Ascending aorta (tissue), 2 donors: ENCODE measurements at regions of chr17 and their contacts with region 1.

Region 1: DNA sequence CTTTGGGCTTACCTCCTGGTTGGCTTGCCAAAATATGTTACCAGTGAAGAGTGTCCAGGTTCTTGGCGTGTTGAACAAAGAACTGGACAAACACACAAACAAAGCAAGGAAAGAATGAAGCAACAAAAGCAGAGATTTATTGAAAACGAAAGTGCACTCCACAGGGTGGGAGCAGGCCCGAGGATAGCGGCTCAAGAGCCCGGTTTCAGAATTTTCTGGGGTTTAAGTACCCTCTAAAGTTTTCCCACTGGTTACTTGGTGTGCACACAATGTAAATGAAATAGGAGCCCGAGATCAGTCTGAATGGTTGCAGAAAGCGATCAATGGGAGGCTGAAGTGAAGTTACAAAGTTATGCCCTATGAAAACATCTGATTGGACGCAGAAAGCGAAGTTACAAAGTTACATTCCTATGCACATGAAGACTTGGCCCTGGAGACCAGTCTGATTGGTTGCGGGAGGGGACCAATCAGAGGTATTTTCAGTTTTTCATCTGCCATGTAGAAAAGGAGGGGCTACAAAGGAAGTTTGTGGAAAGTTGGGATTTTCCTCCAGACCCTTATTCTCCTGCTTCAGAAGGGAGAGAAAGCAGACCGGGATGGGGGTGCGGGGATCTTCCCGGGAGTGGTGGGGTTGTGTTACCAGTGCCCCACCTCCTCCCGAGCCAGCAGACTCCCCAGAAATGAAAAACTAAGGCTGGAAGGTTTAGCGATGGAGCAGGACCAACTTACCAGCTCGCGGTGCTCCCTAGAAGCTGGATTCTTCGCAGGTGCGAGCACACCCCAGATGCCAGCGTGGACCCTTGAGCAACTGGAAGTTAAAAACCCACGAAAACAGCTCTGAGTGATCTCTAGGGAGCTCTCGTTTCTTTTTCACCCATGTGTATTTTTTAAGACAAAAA is at the start of gene SLFN12:
- DNase-seq: peak in 1 of 2 donors; percentile 85
- H3K4me3 ChIP-seq: peak within 1 kb of the TSS; percentile 68 to 70
- H3K27ac ChIP-seq: peak within 1 kb of the TSS; percentile 84 to 91
- H3K4me1 ChIP-seq: peaks cover 0 to 19% of the 10 kb centered on the region in 2 donors
- H3K27me3 ChIP-seq: no peaks in the 10 kb centered on the region
- CTCF ChIP-seq: no peak
- total RNA-seq, gene SLFN12: 6.8 TPM

Region 2: DNA sequence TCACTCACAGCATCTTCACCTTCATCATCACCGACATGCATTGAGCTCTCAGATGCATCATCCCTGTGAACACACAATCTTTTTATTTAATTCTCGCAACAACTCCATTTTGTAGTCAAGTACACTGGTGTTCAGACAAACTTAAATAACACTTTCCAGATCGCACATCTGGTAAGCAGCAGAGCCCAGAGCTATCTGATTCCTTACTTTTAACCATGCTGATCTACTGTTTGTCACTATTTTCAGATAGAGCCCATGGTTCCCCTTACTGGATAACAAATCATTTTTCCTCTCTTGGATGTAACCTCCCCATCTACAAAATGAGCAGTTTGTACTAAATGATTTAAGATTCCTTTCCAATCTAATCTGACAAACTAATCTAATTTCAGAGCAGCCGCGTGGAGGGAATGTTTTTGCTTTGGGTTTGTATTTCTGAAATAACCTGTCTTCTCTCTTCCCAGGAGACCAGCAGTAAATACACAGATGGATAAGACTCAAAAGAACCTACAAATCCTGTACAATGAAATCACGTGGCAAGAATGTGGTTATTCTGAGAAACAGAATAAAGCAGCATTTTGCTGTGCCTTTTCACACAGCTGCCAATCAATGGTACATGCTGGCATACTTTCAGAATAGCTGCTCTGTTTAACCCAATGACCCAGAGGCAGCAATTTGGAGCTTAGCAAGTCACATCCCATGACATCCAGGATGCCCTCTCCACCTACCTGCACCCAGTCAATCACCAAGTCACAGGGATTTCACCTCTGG is 1250.2 kb before region 1 on chr17:
- intact Hi-C with region 1: no loop called
- DNase-seq: no peak
- H3K4me3 ChIP-seq: no peak overlapping the region
- H3K27ac ChIP-seq: no peak overlapping the region
- H3K4me1 ChIP-seq: peaks cover 0 to 6% of the 10 kb centered on the region in 2 donors
- H3K27me3 ChIP-seq: no peaks in the 10 kb centered on the region
- CTCF ChIP-seq: no peak

Region 3: DNA sequence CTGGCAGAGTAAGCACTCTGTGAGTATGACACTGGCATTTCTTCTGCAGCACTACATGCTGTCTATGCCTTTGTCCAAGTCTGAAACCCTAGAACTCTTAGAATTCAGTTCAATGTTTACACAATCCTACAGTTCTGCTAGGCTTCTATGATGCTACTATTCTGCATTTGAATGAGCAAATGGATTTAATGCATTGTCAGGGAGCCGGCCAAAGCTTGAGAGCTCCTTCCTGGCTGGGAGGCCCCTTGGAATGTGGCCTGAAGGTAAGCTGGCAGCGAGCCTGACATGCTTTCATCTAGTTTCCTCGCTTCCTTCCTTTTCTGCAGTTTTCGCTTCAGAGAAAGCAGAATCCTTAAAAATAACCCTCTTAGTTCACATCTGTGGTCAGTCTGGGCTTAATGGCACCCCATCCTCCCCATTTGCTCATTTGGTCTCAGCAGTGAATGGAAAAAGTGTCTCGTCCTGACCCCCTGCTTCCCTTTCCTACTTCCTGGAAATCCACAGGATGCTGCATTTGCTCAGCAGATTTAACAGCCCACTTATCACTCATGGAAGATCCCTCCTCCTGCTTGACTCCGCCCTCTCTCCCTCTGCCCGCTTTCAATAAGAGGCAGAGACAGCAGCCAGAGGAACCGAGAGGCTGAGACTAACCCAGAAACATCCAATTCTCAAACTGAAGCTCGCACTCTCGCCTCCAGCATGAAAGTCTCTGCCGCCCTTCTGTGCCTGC is 1177.6 kb before region 1 on chr17 and contains the start of gene CCL2:
- intact Hi-C with region 1: loop called (anchors 2 kb)
- DNase-seq: peak in 1 of 2 donors; percentile 86
- H3K4me3 ChIP-seq: peak within 1 kb of the TSS; percentile 46 to 56
- H3K27ac ChIP-seq: peak within 1 kb of the TSS; percentile 87 to 89
- H3K4me1 ChIP-seq: peaks cover 39 to 60% of the 10 kb centered on the region in 2 donors
- H3K27me3 ChIP-seq: no peaks in the 10 kb centered on the region
- CTCF ChIP-seq: no peak
- total RNA-seq, gene CCL2: 162 TPM

Region 4: GRCh38 chr17:35373534-35373983 is 58.9 kb before region 1 on chr17 and contains the start of gene SLFN11:
- intact Hi-C with region 1: loop called (anchors 1 kb)
- DNase-seq: peak; percentile 79 to 95
- H3K4me3 ChIP-seq: peak within 1 kb of the TSS; percentile 78 to 87
- H3K27ac ChIP-seq: peak within 1 kb of the TSS; percentile 97
- H3K4me1 ChIP-seq: peaks cover 0 to 10% of the 10 kb centered on the region in 2 donors
- H3K27me3 ChIP-seq: no peaks in the 10 kb centered on the region
- CTCF ChIP-seq: no peak
- total RNA-seq, gene SLFN11: 30.3 TPM

Region 5: DNA sequence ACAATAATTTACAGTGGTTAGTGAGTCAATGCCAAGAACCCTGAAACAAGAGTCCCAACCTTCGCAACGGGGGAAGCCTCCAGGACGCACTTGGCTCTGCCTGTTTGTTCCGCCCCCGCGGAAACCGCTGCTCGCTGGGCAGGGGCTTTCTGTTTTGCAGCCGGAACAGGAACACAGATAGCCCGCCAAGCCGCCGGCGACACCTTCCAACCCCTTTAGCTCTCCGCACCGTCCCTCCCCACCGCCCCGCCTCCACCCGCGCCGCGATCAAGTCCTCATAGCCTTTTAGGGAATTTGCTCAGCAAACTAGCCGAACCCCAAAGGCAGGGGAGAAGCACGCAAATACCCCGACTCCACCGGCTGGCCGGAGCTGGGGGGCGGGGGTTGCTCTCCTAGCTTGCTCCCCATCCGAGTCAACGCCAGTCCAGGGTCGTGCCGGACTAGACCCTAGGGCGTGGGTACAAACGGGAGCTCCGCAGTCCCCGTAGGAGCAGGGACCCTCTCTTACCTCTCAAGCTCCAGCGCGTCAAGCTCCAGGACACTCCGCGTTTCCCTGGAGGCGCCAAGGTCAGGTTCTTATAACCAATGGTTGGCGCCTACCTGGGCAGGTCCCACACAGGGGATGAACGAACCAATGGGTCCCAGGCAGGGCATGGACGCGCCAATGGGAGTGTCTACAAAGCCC is 15.9 kb after region 1 on chr17 and contains the start of gene SLFN13:
- intact Hi-C with region 1: loop called (anchors 2 kb)
- DNase-seq: peak; percentile 57 to 85
- H3K4me3 ChIP-seq: peak within 1 kb of the TSS; percentile 69 to 96
- H3K27ac ChIP-seq: peak within 1 kb of the TSS; percentile 42 to 71
- H3K4me1 ChIP-seq: peaks cover 0 to 9% of the 10 kb centered on the region in 2 donors
- H3K27me3 ChIP-seq: no peaks in the 10 kb centered on the region
- CTCF ChIP-seq: no peak
- total RNA-seq, gene SLFN13: 7.1 TPM

Region 6: GRCh38 chr17:35460354-35460851 is 28.0 kb after region 1 on chr17:
- intact Hi-C with region 1: no loop called
- DNase-seq: peak in 1 of 2 donors; percentile 65
- H3K4me3 ChIP-seq: peak overlapping the region; percentile 18 to 48
- H3K27ac ChIP-seq: no peak overlapping the region
- H3K4me1 ChIP-seq: no peaks in the 10 kb centered on the region
- H3K27me3 ChIP-seq: no peaks in the 10 kb centered on the region
- CTCF ChIP-seq: no peak

Region 7: DNA sequence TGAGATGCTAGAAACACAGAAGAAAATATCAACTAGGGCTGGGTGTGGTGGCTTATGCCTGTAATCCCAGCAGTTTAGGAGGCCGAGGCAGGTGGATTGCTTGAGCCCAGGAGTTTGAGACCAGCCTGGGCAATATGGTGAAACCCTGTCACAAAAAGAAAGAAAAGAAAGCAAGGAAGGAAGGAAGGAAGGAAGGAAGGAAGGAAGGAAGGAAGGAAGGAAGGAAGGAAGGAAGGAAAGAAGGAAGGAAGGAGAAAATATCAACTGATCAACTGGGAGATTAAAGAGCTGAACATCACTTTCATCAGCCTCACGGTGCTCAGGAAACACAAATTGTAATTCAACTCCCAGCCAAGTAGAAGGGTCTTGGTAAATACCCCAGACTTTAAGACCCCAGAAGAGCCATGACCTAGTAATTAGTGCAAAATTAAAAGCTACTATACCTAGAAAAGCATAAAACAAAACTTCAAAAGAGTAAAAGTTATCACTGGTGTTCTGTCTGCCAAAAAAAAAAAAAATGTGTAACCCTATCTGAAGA is 43.9 kb after region 1 on chr17:
- intact Hi-C with region 1: no loop called
- DNase-seq: no peak
- H3K4me3 ChIP-seq: no peak overlapping the region
- H3K27ac ChIP-seq: no peak overlapping the region
- H3K4me1 ChIP-seq: no peaks in the 10 kb centered on the region
- H3K27me3 ChIP-seq: no peaks in the 10 kb centered on the region
- CTCF ChIP-seq: no peak

Region 8: DNA sequence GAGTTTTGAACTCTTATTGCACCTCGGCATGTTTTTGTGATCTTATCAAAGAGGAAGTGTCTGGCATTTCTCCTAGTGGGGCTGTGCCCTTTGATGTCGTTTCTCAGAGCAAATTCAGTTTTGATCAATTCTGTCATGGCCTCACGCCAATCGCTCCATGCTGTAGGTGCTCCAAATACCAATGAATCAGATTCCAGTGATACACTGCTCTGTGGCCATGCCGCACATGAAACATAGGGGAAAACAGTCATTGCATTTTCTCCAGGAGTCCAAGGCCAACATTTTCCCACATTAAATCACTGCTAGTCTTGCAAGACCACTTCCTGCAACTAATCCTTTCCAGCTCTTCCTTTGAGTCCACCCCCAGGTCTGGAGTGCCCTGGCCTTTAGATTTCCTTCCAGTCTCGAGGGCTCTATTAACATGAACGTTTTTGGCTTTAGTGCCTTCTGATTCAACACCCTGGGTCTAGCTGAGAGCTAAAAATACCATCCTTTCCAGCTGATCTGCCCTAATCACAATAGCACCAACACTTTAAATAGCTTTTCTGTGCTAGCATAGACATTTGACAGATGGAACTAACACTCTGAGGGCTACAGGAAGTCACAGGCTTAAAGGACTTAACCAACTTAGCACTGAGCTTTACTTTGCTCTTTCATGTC is 280.8 kb after region 1 on chr17:
- intact Hi-C with region 1: loop called (anchors 10 kb)
- DNase-seq: peak; percentile 37 to 91
- H3K4me3 ChIP-seq: peak overlapping the region in 1 of 2 donors; percentile 14
- H3K27ac ChIP-seq: peak overlapping the region; percentile 74 to 85
- H3K4me1 ChIP-seq: peaks cover 12 to 41% of the 10 kb centered on the region in 2 donors
- H3K27me3 ChIP-seq: no peaks in the 10 kb centered on the region
- CTCF ChIP-seq: no peak